Activated CD4-positive, alpha-beta T cell treated with anti-CD3 and anti-CD28 coated beads for 36 hours (primary cell): ENCODE measurements at regions of chr6 and their contacts with region 1.

Region 1: GRCh38 chr6:144423167-144423566 is 138.0 kb downstream of the UTRN start:
- DNase-seq: no peak
- ATAC-seq: no peak
- H3K4me3 Mint-ChIP-seq: no peak overlapping the region
- H3K27ac Mint-ChIP-seq: no peak overlapping the region
- H3K4me1 Mint-ChIP-seq: peaks cover 9% of the 10 kb centered on the region
- H3K27me3 Mint-ChIP-seq: no peaks in the 10 kb centered on the region

Region 2: DNA sequence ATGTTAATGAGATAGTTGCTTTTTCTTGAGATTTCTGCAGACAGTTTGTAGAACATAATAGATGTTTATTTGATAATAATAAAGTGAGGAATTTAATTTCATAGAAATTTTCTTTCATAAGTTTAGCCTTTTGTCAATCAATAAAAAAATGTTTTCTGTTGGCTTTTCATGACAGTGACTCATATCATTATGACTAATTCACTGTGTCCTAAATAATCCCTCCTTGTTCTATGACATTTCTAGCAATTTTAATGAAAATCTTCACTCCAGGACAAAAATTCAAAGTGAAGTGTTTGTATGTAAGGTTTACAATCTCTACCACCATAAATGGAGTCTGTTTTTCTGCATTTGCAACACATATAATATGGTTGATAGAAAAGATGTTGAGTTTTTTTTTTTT is 28.2 kb before region 1 on chr6:
- CTCF ChIA-PET with region 1: no interaction called
- POLR2A ChIA-PET with region 1: no interaction called
- intact Hi-C with region 1: loop called in 1 of 2 experiments (anchors 2 kb)
- DNase-seq: no peak
- ATAC-seq: no peak
- H3K4me3 Mint-ChIP-seq: no peak overlapping the region
- H3K27ac Mint-ChIP-seq: no peak overlapping the region
- H3K4me1 Mint-ChIP-seq: peaks cover 47% of the 10 kb centered on the region
- H3K27me3 Mint-ChIP-seq: no peaks in the 10 kb centered on the region

Region 3: DNA sequence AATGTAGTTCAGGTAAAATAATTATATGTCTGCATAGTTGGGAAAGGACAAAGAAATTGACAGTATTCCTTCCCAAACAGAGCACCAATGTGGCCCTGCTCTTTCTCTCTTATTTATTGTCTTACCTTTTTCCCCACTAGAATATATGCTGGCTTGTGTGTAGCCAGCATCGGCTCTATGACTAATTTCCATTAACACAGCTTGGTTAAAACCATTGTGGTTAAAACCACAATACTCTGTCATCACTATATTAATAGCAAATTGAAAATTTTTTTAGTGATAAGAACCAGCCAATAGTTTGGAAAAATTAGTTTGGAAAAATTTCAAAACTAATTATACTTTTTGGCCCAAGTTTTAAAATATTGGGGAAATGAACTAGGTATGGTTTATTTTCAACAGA is 397.1 kb after region 1 on chr6:
- CTCF ChIA-PET with region 1: no interaction called
- POLR2A ChIA-PET with region 1: no interaction called
- intact Hi-C with region 1: no loop called
- DNase-seq: no peak
- ATAC-seq: no peak
- H3K4me3 Mint-ChIP-seq: no peak overlapping the region
- H3K27ac Mint-ChIP-seq: no peak overlapping the region
- H3K4me1 Mint-ChIP-seq: no peaks in the 10 kb centered on the region
- H3K27me3 Mint-ChIP-seq: no peaks in the 10 kb centered on the region